Posterior cingulate gyrus (tissue), 11 donors: ENCODE measurements at regions of chrX and their contacts with region 1.

Region 1: DNA sequence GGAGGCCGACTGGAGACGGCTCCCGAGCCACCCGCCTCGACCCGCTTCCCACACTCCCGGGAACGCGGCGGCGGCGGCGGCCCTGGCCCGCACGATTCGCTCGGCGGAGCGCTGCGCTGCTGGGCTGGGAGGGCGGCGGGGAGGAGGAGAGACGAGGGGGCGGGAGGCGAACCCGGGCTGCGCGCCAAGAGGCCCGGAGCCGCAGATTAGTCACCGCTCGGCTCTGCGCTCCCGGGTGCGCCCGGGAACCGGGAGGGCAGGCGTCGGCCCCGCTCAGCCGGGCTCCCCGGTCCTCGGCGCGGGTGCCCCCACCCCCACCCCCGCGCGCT is 11.2 kb upstream of the BCOR start:
- DNase-seq: peak in 7 of 10 donors; percentile 54 to 93 (median 73)

Region 2: GRCh38 chrX:40153335-40154249 is 44.7 kb after region 1 on chrX:
- intact Hi-C with region 1: loop called (anchors 2 kb)
- DNase-seq: peak in 5 of 10 donors; percentile 19 to 93 (median 67)